ENCODE measurements at regions of chrX and their contacts with region 1.

Region 1: DNA sequence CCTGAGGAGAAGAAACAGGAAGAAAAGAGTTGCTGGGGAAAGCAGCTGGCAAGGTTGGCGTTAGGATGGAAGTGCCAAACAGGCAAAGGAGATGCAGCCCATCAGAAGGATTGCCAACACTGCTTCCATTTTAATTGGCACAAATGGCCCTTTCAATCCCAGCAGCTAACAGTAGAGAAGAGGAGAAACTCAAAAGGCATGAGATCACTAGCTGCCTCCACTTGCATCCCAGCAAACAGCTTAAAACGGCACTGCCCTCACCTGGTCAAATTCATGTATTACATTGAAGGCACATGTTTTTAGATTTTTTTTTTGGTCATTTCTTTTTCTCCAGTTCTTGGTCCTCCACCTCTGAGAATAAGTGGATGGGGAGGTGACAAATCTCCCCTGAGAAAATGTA is 14.9 kb upstream of the LOC101059915 start:
- DNase-seq: peak in 4 of 5 donors; percentile 58 to 63 (median 62)
- H3K4me3 ChIP-seq: no peak overlapping the region
- H3K4me3 Mint-ChIP-seq: no peak overlapping the region
- H3K27ac ChIP-seq: no peak overlapping the region
- H3K27ac Mint-ChIP-seq: peak overlapping the region in 2 of 7 donors; percentile 48 to 57
- H3K4me1 ChIP-seq: peaks cover 8% of the 10 kb centered on the region
- H3K4me1 Mint-ChIP-seq: peaks cover 3 to 14% (median 11%) of the 10 kb centered on the region in 4 donors
- H3K27me3 ChIP-seq: no peaks in the 10 kb centered on the region
- H3K27me3 Mint-ChIP-seq: no peaks in the 10 kb centered on the region

Region 2: DNA sequence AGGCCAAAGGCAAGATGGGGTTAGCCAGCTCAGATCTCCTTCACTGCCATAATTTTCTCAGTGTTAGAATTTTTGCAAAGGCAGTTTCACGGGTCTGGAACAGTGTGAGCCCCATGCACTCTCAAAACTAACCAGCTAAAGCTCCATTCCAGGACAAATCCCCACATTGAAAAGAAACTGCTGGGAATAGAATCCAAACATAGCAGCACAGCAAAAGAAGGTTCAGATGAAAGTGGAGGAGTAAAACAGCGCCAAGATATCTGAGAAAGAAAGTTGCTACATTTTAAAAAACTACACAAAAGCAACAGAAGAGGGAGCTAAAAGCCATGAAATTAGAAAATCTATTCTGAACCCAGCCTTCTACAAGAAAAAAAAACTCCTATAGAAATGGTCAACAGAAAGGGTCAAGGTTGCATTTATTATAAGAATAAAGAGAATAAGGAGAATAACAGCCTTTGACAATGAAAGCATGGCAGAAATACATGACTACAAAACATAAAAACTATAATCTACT is 681.9 kb before region 1 on chrX:
- CTCF ChIA-PET with region 1: no interaction called
- POLR2A ChIA-PET with region 1: no interaction called
- intact Hi-C with region 1: loop called (anchors 5 kb)
- DNase-seq: peak in 4 of 5 donors; percentile 5 to 29 (median 11)
- H3K4me3 ChIP-seq: no peak overlapping the region
- H3K4me3 Mint-ChIP-seq: peak overlapping the region in 2 of 8 donors; percentile 4 to 49
- H3K27ac ChIP-seq: no peak overlapping the region
- H3K27ac Mint-ChIP-seq: no peak overlapping the region
- H3K4me1 ChIP-seq: no peaks in the 10 kb centered on the region
- H3K4me1 Mint-ChIP-seq: peaks cover 0 to 8% (median 1%) of the 10 kb centered on the region in 4 donors
- H3K27me3 ChIP-seq: no peaks in the 10 kb centered on the region
- H3K27me3 Mint-ChIP-seq: no peaks in the 10 kb centered on the region

Region 3: GRCh38 chrX:71432733-71433132 is 219.7 kb before region 1 on chrX:
- CTCF ChIA-PET with region 1: interaction called, 3 read pairs
- POLR2A ChIA-PET with region 1: no interaction called
- intact Hi-C with region 1: loop called (anchors 5 kb)
- DNase-seq: no peak
- H3K4me3 ChIP-seq: no peak overlapping the region
- H3K4me3 Mint-ChIP-seq: no peak overlapping the region
- H3K27ac ChIP-seq: no peak overlapping the region
- H3K27ac Mint-ChIP-seq: no peak overlapping the region
- H3K4me1 ChIP-seq: no peaks in the 10 kb centered on the region
- H3K4me1 Mint-ChIP-seq: peaks cover 0 to 4% (median 3%) of the 10 kb centered on the region in 4 donors
- H3K27me3 ChIP-seq: no peaks in the 10 kb centered on the region
- H3K27me3 Mint-ChIP-seq: no peaks in the 10 kb centered on the region

Region 4: DNA sequence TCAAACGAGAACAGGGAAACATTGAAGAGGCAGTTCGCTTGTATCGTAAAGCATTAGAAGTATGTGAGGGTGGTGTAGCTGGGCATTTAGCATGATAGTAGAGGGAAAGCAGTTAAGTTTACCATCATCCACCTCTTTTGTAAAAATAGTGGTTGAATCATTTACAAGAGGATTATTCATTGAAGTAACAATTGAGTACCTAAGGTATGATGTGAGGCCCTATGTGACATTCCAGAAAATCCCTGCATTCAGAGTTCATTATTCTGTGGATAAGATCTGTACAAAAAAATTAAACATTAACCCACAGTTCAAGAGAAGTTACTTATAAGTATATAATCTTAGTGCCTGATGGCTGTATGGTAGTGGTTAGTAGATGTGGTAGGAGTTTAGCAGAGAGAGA is 96.4 kb before region 1 on chrX:
- CTCF ChIA-PET with region 1: no interaction called
- POLR2A ChIA-PET with region 1: no interaction called
- intact Hi-C with region 1: loop called (anchors 5 kb)
- DNase-seq: no peak
- H3K4me3 ChIP-seq: no peak overlapping the region
- H3K4me3 Mint-ChIP-seq: no peak overlapping the region
- H3K27ac ChIP-seq: no peak overlapping the region
- H3K27ac Mint-ChIP-seq: peak overlapping the region in 1 of 7 donors; percentile 71
- H3K4me1 ChIP-seq: no peaks in the 10 kb centered on the region
- H3K4me1 Mint-ChIP-seq: peaks cover 3 to 10% (median 6%) of the 10 kb centered on the region in 4 donors
- H3K27me3 ChIP-seq: no peaks in the 10 kb centered on the region
- H3K27me3 Mint-ChIP-seq: no peaks in the 10 kb centered on the region

Region 5: DNA sequence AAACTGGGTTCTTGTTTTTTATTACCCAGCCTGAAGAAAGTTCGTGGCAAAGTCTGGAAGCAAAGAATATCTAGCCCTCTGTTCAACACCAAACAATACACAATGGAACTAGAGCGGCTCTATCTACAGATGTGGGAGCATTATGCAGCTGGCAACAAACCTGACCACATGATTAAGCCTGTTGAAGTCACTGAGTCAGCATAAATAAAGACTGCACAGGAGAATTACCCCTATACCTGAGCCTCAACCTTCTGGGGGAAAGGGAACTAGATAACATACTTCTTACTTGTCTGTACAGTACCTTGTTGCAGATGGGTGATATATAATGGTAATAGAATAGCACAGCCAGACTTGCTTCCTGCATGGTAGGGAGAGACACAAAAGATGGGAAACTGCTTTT is 78.8 kb before region 1 on chrX:
- CTCF ChIA-PET with region 1: interaction called, 3 read pairs
- POLR2A ChIA-PET with region 1: no interaction called
- intact Hi-C with region 1: loop called (anchors 5 kb)
- DNase-seq: no peak
- H3K4me3 ChIP-seq: no peak overlapping the region
- H3K4me3 Mint-ChIP-seq: no peak overlapping the region
- H3K27ac ChIP-seq: no peak overlapping the region
- H3K27ac Mint-ChIP-seq: peak overlapping the region in 1 of 7 donors; percentile 35
- H3K4me1 ChIP-seq: no peaks in the 10 kb centered on the region
- H3K4me1 Mint-ChIP-seq: peaks cover 0 to 6% (median 1%) of the 10 kb centered on the region in 4 donors
- H3K27me3 ChIP-seq: no peaks in the 10 kb centered on the region
- H3K27me3 Mint-ChIP-seq: no peaks in the 10 kb centered on the region

Region 6: DNA sequence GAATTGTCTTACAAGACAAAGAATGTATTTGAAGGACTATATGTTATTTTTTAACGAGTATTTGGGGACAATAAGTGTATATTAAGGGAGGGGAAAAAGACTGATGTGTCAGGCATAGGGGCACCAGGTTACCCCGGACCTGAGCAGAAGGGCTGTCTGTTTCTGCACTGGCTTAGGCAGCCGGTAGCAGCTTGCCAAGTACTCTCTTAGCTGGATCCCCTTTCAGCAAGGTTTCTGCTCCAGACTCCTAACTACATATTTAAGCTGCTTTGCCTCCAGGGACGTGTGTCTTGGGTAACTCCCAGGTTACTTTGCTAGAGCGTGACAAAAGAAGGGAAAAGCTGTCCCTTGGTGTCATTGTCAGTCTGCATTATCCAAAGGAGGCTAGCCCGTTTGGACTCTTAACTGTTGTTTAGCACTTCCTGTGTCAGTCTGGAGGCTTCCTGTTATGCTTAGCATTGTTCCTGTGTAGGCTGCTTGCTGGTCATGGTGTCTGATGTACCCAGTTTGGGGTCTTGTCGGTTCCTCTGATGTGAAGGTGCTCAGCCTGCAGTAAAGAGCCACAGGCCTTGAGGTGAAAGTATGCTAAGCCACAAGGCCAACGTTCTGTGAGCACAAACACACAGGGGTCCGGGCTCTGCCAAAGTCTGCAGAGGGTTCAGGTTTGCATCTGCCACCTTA is 45.7 kb before region 1 on chrX:
- CTCF ChIA-PET with region 1: interaction called, 31 read pairs
- POLR2A ChIA-PET with region 1: no interaction called
- intact Hi-C with region 1: loop called (anchors 2 kb)
- DNase-seq: peak in 4 of 5 donors; percentile 35 to 71 (median 46)
- H3K4me3 ChIP-seq: no peak overlapping the region
- H3K4me3 Mint-ChIP-seq: peak overlapping the region in 7 of 8 donors; percentile 10 to 75 (median 55)
- H3K27ac ChIP-seq: peak overlapping the region; percentile 51
- H3K27ac Mint-ChIP-seq: peak overlapping the region; percentile 68 to 93 (median 90)
- H3K4me1 ChIP-seq: peaks cover 44% of the 10 kb centered on the region
- H3K4me1 Mint-ChIP-seq: peaks cover 41 to 74% (median 51%) of the 10 kb centered on the region in 4 donors
- H3K27me3 ChIP-seq: no peaks in the 10 kb centered on the region
- H3K27me3 Mint-ChIP-seq: no peaks in the 10 kb centered on the region

Region 7: GRCh38 chrX:71615954-71616353 is 36.5 kb before region 1 on chrX:
- CTCF ChIA-PET with region 1: interaction called, 12 read pairs
- POLR2A ChIA-PET with region 1: interaction called, 8 read pairs
- intact Hi-C with region 1: loop called (anchors 1 kb)
- DNase-seq: no peak
- H3K4me3 ChIP-seq: peak overlapping the region in 1 of 2 donors; percentile 61
- H3K4me3 Mint-ChIP-seq: peak overlapping the region; percentile 84 to 93 (median 90)
- H3K27ac ChIP-seq: peak overlapping the region; percentile 81
- H3K27ac Mint-ChIP-seq: peak overlapping the region; percentile 85 to 97 (median 90)
- H3K4me1 ChIP-seq: peaks cover 42% of the 10 kb centered on the region
- H3K4me1 Mint-ChIP-seq: peaks cover 29 to 77% (median 59%) of the 10 kb centered on the region in 4 donors
- H3K27me3 ChIP-seq: no peaks in the 10 kb centered on the region
- H3K27me3 Mint-ChIP-seq: no peaks in the 10 kb centered on the region

Region 8: DNA sequence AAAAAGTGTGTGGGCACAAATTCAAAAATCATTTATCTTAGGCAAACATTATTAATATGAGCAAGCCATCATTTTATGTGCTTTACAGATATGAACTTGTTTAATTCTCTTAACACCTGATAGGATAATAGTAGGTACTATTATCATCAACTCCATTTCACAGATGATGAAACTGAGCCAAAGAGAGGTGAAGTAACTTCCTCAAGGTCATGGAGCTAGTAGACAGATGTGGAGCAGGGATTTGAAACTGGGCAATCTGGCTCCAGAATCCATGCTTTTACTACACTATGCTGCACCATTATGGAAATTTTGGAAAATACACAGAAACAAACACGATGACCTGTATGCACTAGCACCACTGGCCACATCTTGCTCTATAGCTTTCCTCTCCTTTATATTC is 528.1 kb after region 1 on chrX:
- CTCF ChIA-PET with region 1: no interaction called
- POLR2A ChIA-PET with region 1: no interaction called
- intact Hi-C with region 1: no loop called
- DNase-seq: no peak
- H3K4me3 ChIP-seq: peak overlapping the region in 1 of 2 donors; percentile 69
- H3K4me3 Mint-ChIP-seq: peak overlapping the region in 2 of 8 donors; percentile 17 to 26
- H3K27ac ChIP-seq: peak overlapping the region; percentile 68
- H3K27ac Mint-ChIP-seq: peak overlapping the region in 1 of 7 donors; percentile 21
- H3K4me1 ChIP-seq: peaks cover 24% of the 10 kb centered on the region
- H3K4me1 Mint-ChIP-seq: peaks cover 5 to 12% (median 7%) of the 10 kb centered on the region in 4 donors
- H3K27me3 ChIP-seq: no peaks in the 10 kb centered on the region
- H3K27me3 Mint-ChIP-seq: no peaks in the 10 kb centered on the region